Endothelial cell of umbilical vein (primary cell): ENCODE measurements at regions of chr20 and their contacts with region 1.

Region 1: DNA sequence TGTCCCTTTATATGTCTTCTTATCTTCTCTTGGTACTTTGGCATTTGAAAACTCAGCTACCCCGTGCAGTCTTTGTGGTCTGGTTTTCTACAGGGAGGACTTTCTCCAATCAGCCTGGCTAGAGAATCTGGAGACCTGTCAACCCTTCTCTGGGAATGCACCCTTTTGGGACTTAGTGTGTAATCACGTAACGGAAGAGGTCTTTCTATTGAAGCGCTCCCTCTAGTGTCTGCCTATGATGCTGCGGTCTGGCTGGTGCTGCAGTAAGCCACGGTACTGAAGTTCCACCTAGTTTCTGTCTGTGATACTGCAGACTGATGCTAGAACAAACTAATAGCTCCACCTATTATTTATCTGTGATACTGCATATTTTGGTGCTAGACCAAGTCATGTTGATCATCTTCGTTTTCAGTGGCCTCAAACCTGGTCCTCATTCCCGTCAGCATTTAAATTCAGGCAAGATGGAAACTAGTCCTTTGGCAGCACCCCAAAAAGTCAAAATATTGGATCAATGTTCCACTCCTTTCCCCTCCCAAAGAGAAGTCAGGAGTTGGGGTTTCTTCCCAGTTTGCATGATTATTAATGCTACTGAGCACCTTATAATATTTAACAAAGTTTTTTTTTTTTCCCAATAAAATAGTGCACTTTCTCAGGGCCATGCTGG is 12.5 kb upstream of the SIRPB2 start:
- DNase-seq: peak; percentile 96
- H3K4me3 ChIP-seq: no peak overlapping the region
- H3K27ac ChIP-seq: no peak overlapping the region
- H3K4me1 ChIP-seq: no peaks in the 10 kb centered on the region
- H3K27me3 ChIP-seq: peaks cover 15 to 30% of the 10 kb centered on the region in 2 experiments
- CTCF ChIP-seq: peak; percentile 98 to 100
- POLR2A ChIP-seq: no peak

Region 2: DNA sequence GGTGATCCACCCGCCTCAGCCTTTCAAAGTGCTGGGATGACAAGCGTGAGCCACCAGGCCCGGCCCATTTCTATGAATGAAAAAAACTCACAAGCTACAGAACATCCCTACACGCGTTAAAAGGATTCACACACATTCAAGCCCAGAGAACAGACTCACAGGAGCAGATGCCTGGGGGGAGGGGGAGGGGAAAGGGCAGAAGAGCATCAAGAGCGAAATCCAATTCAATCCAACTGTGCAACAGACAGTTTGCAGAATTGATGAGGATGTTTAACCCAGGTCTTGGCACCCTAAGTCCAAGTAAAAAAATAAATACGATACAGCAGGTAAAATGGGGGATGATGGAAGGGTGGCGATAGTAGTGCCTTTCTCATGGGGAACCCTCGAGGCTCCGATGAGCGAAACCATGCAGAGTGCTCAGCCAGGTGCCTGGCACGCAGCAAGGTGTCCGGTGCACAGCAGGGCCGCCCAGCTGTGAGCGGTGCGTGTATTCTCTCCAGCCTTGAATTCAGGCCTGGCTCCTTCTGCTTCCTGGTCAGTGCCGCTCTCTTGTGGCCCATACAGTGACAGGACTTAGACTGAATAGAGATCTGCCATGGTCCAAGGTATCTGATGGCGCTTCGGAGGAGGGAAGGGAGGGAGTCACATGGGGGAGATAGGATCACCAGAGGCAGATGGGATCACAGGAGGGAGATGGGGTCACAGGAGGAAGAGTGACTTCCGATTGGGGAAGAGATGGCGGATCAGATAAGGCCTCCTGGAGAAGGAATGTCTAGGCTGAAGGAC is 552.1 kb before region 1 on chr20:
- CTCF ChIA-PET with region 1: no interaction called
- POLR2A ChIA-PET with region 1: no interaction called
- dilution Hi-C with region 1: no loop called
- intact Hi-C with region 1: no loop called
- DNase-seq: no peak
- H3K4me3 ChIP-seq: no peak overlapping the region
- H3K27ac ChIP-seq: no peak overlapping the region
- H3K4me1 ChIP-seq: no peaks in the 10 kb centered on the region
- H3K27me3 ChIP-seq: peaks cover 0 to 5% of the 10 kb centered on the region in 2 experiments
- CTCF ChIP-seq: no peak
- POLR2A ChIP-seq: no peak

Region 3: DNA sequence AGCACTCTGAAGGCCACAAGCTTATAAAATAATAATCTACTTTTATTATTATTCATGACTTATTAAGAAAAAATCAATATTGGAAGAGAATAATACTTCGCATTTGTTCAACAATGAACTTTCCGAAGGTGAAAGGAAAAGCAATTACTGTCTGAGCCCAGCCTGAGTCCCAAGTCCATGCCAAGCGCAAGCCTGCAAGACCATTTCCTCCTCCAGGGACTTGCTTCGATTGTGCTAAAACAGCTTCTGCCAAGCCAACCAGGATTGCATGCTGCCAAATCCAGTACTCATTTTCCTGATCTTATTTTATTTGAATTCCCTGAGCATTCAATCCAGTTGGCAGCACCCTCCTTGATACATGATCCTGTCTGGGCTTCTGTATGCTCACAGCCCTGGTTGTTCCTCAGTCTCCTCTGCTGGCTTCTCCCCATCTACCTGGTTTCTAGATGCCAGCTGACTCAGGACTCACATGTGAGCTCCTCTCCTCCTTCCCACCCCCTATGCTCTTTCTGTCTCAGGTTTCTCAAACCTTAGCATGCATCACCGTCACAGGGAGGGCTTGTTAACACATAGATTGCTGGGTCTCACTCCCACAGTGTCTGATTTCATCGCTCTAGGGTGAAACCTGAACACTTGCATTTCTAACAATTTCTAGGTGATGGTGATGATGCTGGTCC is 441.2 kb before region 1 on chr20:
- CTCF ChIA-PET with region 1: no interaction called
- POLR2A ChIA-PET with region 1: no interaction called
- dilution Hi-C with region 1: no loop called
- intact Hi-C with region 1: no loop called
- DNase-seq: no peak
- H3K4me3 ChIP-seq: no peak overlapping the region
- H3K27ac ChIP-seq: no peak overlapping the region
- H3K4me1 ChIP-seq: no peaks in the 10 kb centered on the region
- H3K27me3 ChIP-seq: peaks cover 2 to 3% of the 10 kb centered on the region in 2 experiments
- CTCF ChIP-seq: no peak
- POLR2A ChIP-seq: no peak

Region 4: DNA sequence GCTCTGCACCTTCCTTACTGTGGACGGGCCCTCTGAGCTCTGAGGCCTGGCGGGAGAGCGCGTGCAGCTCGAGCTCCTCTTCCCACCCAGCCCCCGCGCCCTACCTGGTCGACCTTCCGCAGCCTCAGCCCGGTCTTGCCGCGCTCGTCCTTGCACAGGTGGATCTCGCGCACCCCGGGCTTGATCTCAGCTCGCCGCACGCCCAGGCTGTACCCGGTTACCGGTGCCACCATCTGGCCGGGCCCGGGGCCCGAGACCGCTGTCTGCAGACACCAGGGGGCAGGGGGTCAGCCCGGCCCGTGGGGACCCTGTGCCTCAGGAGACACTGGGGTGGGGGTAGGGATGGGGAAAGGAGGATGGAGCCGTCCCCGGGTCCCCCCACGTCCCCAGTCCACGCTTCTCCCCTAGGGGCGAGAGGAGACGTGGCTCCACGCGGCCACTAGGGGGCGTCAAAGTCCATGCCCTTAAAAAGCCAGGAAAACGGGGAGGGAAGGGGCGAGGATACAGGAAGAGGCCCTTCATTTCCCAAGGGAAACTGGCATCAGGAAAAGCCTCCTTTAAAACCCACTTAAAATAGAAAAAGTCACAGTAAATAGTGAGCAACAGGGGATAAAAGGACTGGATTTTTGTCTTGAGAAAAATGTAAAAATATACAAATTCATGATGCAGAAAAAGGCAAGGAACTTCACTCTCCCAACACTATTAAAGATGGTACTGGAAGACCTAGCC is 190.3 kb before region 1 on chr20:
- CTCF ChIA-PET with region 1: interaction called, 9 read pairs
- POLR2A ChIA-PET with region 1: no interaction called
- dilution Hi-C with region 1: no loop called
- intact Hi-C with region 1: loop called (anchors 1 kb)
- DNase-seq: peak; percentile 78
- H3K4me3 ChIP-seq: peak overlapping the region in 1 of 3 experiments; percentile 8
- H3K27ac ChIP-seq: peak overlapping the region; percentile 61
- H3K4me1 ChIP-seq: peaks cover 9% of the 10 kb centered on the region
- H3K27me3 ChIP-seq: no peaks in the 10 kb centered on the region
- CTCF ChIP-seq: peak; percentile 89 to 95
- POLR2A ChIP-seq: no peak

Region 5: DNA sequence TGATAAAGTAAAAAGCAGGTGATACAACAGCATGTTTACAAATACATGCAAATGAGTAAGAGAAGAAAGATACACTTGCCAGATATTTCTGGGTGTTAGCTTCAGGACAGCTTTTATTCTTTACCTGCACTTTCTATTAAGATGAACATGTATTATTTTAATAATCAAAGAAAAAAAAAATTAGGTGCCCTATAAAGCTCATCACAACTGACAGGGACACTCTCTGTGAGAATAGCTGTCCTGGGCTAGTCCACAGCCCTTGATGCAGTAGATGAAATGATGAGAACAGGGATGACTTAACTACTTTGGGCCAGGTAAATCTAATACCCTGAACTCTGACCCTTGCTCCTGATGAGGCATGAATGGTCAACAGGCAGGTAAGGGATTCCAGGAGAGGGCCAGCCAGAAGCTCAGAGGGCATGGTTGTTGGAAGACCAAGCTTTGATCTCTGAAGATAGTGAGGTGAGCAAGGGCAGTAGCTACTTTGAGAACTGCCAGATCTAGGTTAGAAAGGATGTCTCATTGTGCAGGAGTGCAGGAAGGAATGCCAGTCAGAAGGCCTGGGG is 52.7 kb before region 1 on chr20:
- CTCF ChIA-PET with region 1: interaction called, 34 read pairs
- POLR2A ChIA-PET with region 1: no interaction called
- dilution Hi-C with region 1: no loop called
- intact Hi-C with region 1: no loop called
- DNase-seq: no peak
- H3K4me3 ChIP-seq: no peak overlapping the region
- H3K27ac ChIP-seq: no peak overlapping the region
- H3K4me1 ChIP-seq: no peaks in the 10 kb centered on the region
- H3K27me3 ChIP-seq: no peaks in the 10 kb centered on the region
- CTCF ChIP-seq: no peak
- POLR2A ChIP-seq: no peak

Region 6: DNA sequence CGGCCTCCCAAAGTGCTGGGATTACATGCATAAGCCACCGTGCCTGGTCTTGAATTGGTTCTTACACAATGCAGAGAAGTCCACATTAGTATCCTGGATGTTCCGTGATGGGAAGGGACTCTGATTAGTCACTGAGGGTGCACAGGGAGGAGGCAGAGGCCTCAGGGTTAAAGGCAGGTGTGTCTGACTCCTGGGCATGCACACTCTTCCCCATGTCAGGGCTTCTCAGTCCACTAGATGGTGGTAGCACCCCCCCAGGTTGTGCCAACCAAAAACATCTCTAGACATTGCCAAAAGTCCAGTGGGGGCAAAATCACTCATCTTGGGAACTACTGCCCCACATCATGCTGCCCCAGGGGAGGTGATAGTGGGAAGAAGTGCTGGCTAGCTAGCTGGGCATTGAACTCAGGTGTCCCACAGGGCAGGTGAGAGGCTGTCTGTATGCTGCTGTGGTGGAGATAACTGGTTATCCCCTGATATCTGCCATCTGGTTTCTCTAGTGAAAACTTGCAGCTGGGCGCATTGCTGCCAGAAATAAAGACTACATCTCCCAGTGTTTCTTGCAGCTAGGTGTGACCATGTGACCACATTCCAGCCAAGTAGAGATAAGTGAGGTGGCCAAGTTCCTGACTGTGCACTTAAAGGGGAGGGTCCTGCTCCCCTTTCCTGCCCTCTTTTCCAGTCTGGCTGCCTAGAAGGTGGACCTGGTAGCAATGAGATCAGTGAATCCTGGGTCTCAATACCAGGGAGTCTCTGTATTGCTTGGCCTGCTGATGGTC is 28.7 kb before region 1 on chr20:
- CTCF ChIA-PET with region 1: interaction called, 229 read pairs
- POLR2A ChIA-PET with region 1: no interaction called
- dilution Hi-C with region 1: no loop called
- intact Hi-C with region 1: loop called (anchors 1 kb)
- DNase-seq: no peak
- H3K4me3 ChIP-seq: no peak overlapping the region
- H3K27ac ChIP-seq: no peak overlapping the region
- H3K4me1 ChIP-seq: peaks cover 14% of the 10 kb centered on the region
- H3K27me3 ChIP-seq: no peaks in the 10 kb centered on the region
- CTCF ChIP-seq: peak; percentile 14 to 30
- POLR2A ChIP-seq: no peak

Region 7: DNA sequence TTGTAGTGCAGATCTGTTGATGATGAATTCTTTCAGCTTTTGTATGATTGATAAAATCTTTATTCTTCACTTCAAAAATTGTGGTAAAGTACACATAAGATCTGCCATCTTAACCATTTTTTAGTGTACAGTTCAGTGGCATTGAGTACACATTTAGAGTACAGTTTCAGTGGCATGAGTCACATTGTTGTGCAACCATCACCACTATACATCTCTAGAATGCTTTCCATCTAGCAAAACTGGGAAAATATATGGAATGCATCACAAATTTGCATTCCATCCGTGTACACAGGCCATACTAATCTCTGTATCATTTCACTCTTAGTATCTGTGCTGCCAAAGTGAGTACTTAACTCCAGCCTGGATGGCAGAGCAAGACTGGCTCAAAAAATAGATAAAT is 25.1 kb after region 1 on chr20:
- CTCF ChIA-PET with region 1: interaction called, 16 read pairs
- POLR2A ChIA-PET with region 1: no interaction called
- dilution Hi-C with region 1: no loop called
- intact Hi-C with region 1: no loop called
- DNase-seq: no peak
- H3K4me3 ChIP-seq: no peak overlapping the region
- H3K27ac ChIP-seq: no peak overlapping the region
- H3K4me1 ChIP-seq: no peaks in the 10 kb centered on the region
- H3K27me3 ChIP-seq: no peaks in the 10 kb centered on the region
- CTCF ChIP-seq: no peak
- POLR2A ChIP-seq: no peak

Region 8: DNA sequence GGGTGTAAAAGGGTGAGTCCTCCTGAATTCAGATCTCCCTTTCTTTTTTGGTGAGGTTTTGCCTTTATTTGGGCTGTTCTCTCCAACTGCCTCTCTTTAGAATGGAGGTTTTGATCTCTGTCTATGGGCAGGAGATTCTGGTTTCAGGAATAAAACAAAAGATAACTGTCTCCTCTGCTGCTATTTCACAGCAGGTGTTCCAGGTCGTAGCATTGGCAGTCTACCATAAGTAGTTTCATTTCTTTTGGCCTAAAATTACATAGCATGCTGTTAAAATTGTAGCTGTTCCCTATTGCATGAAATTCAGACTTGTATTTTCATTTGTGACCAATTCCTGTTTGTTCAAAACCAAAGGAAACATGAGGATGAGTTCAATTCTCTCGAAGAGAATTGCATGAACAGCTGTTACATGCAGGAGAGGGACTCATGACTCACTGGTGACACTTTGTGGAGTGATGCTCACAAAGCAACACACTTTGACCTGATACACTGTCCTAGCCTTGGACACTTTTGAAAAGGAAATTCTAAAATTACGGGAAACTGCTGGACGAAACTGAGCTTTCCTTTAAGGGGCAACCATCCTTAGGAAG is 230.7 kb after region 1 on chr20:
- CTCF ChIA-PET with region 1: interaction called, 10 read pairs
- POLR2A ChIA-PET with region 1: no interaction called
- dilution Hi-C with region 1: no loop called
- intact Hi-C with region 1: no loop called
- DNase-seq: peak; percentile 15
- H3K4me3 ChIP-seq: no peak overlapping the region
- H3K27ac ChIP-seq: no peak overlapping the region
- H3K4me1 ChIP-seq: no peaks in the 10 kb centered on the region
- H3K27me3 ChIP-seq: peaks cover 0 to 2% of the 10 kb centered on the region in 2 experiments
- CTCF ChIP-seq: no peak
- POLR2A ChIP-seq: no peak

Region 9: GRCh38 chr20:1894951-1895673 is 391.4 kb after region 1 on chr20 and contains the start of gene SIRPA:
- CTCF ChIA-PET with region 1: no interaction called
- POLR2A ChIA-PET with region 1: no interaction called
- dilution Hi-C with region 1: no loop called
- intact Hi-C with region 1: loop called (anchors 10 kb)
- DNase-seq: peak; percentile 66
- H3K4me3 ChIP-seq: peak within 1 kb of the TSS; percentile 70 to 85 (median 70)
- H3K27ac ChIP-seq: peak within 1 kb of the TSS; percentile 68
- H3K4me1 ChIP-seq: peaks cover 8% of the 10 kb centered on the region
- H3K27me3 ChIP-seq: no peaks in the 10 kb centered on the region
- CTCF ChIP-seq: no peak
- POLR2A ChIP-seq: no peak
- total RNA-seq, gene SIRPA: 58.3 and 59.2 TPM in 2 replicates